HEK293 (cell line): ENCODE measurements at regions of chr4 and their contacts with region 1.

Region 1: DNA sequence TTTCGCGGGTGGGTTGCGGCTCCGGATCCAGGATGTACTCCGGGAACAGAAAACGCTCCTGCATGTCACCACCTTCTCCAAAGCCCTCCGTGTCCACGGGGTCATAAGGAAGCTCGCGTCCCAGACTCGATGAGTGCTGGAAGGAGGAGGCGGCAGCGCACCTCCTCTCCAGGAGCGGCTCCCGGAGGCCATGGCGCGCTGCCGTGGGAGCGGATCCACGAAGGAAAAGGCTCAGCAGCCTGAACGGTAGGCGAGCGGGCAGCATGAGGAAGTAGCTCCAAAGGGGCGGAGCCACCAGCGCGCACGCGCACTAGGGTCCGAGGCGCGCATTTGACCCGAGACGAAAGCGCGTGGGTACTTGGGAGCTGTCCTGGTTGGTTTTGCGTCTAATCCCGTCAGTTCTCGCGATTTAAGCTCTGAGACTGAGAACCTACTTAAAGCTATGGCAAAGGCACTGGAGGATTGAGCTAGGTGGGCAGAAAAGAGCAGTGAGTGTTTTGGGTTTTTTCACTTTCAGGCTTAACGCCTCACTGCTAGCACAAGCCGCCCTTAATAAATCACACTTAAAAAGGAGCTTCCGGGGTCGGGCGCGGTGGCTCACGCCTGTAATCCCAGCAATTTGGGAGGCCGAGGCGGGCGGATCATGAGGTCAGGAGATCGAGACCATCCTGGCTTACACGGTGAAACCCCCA is at the start of gene NOA1:
- H3K4me3 ChIP-seq: peak within 1 kb of the TSS; percentile 82
- H3K27ac ChIP-seq: peak within 1 kb of the TSS; percentile 84
- H3K4me1 ChIP-seq: no peaks in the 10 kb centered on the region; the same call in 1 of the 2 replicates
- CTCF ChIP-seq: no peak

Region 2: DNA sequence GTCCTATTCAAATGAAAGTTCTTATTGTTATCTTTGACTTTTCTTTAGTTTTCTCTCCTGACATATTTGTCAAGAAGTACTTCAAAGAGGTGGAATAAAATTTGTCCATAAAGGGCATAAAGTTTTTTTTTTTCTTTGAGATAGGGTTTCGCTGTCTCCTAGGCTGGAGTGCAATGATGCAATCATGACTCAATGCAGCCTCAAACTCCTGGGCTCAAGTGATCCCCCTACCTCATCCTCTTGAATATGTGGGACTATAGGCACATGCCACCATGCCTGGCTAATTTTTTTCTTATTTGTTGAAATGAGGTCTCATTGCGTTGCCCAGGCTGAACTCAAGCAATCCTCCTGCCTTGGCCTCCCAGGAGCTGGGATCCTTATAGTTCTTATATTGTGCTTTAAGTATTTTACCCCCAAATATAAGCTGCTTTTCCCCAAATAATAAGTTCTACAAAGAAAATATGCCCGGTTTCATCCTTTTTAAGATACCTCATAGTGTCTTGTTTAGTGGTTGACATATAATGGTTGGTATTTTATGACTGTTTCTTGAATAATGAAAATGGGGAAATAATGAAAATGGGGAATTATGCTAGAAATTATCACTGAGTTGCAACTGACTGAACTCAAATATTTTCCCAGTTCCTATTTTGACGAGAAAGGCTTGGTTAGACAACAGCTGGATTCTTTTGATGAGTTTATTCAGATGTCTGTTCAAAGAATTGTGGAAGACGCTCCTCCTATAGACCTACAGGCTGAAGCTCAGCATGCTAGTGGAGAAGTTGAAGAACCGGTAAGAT is 12.8 kb after region 1 on chr4:
- CTCF ChIA-PET with region 1: interaction called, 3 read pairs
- POLR2A ChIA-PET with region 1: interaction called, 15 read pairs
- H3K4me3 ChIP-seq: no peak overlapping the region
- H3K27ac ChIP-seq: no peak overlapping the region
- H3K4me1 ChIP-seq: no peaks in the 10 kb centered on the region
- CTCF ChIP-seq: no peak

Region 3: GRCh38 chr4:57074744-57075143 is 97.3 kb after region 1 on chr4:
- CTCF ChIA-PET with region 1: no interaction called
- POLR2A ChIA-PET with region 1: interaction called, 11 read pairs
- H3K4me3 ChIP-seq: no peak overlapping the region
- H3K27ac ChIP-seq: no peak overlapping the region
- H3K4me1 ChIP-seq: peaks cover 10% of the 10 kb centered on the region
- CTCF ChIP-seq: no peak

Region 4: GRCh38 chr4:57080781-57081650 is 103.5 kb after region 1 on chr4:
- CTCF ChIA-PET with region 1: no interaction called
- POLR2A ChIA-PET with region 1: interaction called, 11 read pairs
- H3K4me3 ChIP-seq: no peak overlapping the region
- H3K27ac ChIP-seq: peak overlapping the region; percentile 69
- H3K4me1 ChIP-seq: peaks cover 8% of the 10 kb centered on the region
- CTCF ChIP-seq: no peak